HepG2 (cell line): ENCODE measurements at regions of chrX and their contacts with region 1.

Region 1: DNA sequence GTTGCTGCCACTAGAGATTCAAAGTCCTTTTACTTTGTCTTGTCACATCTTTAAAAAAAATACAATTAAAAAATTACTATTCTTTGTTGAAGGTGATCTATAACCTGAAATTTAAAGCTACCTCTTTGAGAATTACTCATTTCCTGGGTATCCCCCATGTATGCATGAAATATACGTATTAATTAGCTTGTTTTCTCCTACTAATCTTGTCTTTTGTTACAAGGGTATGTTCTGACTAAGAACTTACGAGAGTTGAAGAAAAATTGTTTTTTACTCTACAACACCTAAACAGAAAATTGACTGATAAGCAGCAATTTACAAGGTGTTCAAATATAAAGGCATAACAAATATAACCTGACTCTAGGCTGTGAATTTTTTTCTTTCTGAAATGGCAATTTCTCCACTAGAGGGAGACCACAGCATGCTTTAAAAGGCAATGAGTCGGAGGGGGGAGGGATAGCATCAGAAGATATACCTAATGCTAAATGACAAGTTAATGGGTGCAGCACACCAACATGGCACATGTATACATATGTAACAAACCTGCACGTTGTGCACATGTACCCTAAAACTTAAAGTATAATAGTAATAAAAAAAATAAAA is 249.6 kb downstream of the OPHN1 start:
- DNase-seq: peak; percentile 27
- ATAC-seq: peak; percentile 56; the same call in 1 of the 3 replicates
- H3K4me3 ChIP-seq: no peak overlapping the region
- H3K27ac ChIP-seq: no peak overlapping the region
- H3K4me1 ChIP-seq: no peaks in the 10 kb centered on the region
- H3K27me3 ChIP-seq: no peaks in the 10 kb centered on the region
- CTCF ChIP-seq: peak; percentile 52
- EP300 ChIP-seq: no peak
- POLR2A ChIP-seq: no peak
- RAD21 ChIP-seq: no peak

Region 2: DNA sequence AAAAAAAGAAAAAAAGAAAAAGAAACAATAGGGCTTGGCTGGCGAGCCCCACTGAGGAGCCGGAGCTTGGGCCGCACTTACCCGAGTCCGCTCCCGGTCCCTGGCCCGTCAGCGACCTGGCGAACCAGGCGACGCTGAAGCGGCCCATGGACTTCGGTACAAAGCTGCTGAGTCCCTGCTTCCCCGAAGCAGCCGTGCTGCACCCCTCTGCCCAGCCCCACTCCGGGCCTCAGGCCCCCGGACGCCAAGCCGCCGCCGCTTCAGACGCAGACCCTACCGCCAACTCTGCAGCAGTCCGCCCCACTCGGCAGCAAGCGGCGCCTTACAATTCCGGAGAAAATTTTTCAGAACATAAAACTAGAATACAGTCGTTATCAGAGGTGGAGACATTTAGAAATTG is 51.0 kb before region 1 on chrX:
- CTCF ChIA-PET with region 1: no interaction called
- POLR2A ChIA-PET with region 1: no interaction called
- in situ Hi-C with region 1: no loop called
- intact Hi-C with region 1: no loop called
- DNase-seq: no peak
- ATAC-seq: no peak
- H3K4me3 ChIP-seq: no peak overlapping the region
- H3K27ac ChIP-seq: no peak overlapping the region
- H3K4me1 ChIP-seq: no peaks in the 10 kb centered on the region
- H3K27me3 ChIP-seq: no peaks in the 10 kb centered on the region
- CTCF ChIP-seq: no peak
- EP300 ChIP-seq: no peak
- POLR2A ChIP-seq: no peak
- RAD21 ChIP-seq: no peak

Region 3: GRCh38 chrX:68273887-68274286 is 90.2 kb after region 1 on chrX:
- CTCF ChIA-PET with region 1: no interaction called
- POLR2A ChIA-PET with region 1: no interaction called
- in situ Hi-C with region 1: no loop called
- intact Hi-C with region 1: no loop called
- DNase-seq: no peak
- ATAC-seq: no peak
- H3K4me3 ChIP-seq: no peak overlapping the region
- H3K27ac ChIP-seq: no peak overlapping the region
- H3K4me1 ChIP-seq: no peaks in the 10 kb centered on the region
- H3K27me3 ChIP-seq: no peaks in the 10 kb centered on the region
- CTCF ChIP-seq: no peak
- EP300 ChIP-seq: no peak
- POLR2A ChIP-seq: no peak
- RAD21 ChIP-seq: no peak

Region 4: GRCh38 chrX:68710870-68711576 is 527.3 kb after region 1 on chrX:
- CTCF ChIA-PET with region 1: interaction called, 4 read pairs
- POLR2A ChIA-PET with region 1: no interaction called
- in situ Hi-C with region 1: no loop called
- intact Hi-C with region 1: loop called (anchors 5 kb)
- DNase-seq: peak; percentile 40
- ATAC-seq: peak; percentile 97
- H3K4me3 ChIP-seq: no peak overlapping the region
- H3K27ac ChIP-seq: no peak overlapping the region
- H3K4me1 ChIP-seq: no peaks in the 10 kb centered on the region
- H3K27me3 ChIP-seq: no peaks in the 10 kb centered on the region
- CTCF ChIP-seq: peak; percentile 84
- EP300 ChIP-seq: no peak
- POLR2A ChIP-seq: no peak
- RAD21 ChIP-seq: peak; percentile 75

Region 5: GRCh38 chrX:68807818-68808217 is 624.1 kb after region 1 on chrX:
- CTCF ChIA-PET with region 1: no interaction called
- POLR2A ChIA-PET with region 1: no interaction called
- in situ Hi-C with region 1: no loop called
- intact Hi-C with region 1: loop called (anchors 10 kb)
- DNase-seq: no peak
- ATAC-seq: peak; percentile 66
- H3K4me3 ChIP-seq: no peak overlapping the region
- H3K27ac ChIP-seq: no peak overlapping the region
- H3K4me1 ChIP-seq: no peaks in the 10 kb centered on the region
- H3K27me3 ChIP-seq: no peaks in the 10 kb centered on the region
- CTCF ChIP-seq: peak; percentile 60
- EP300 ChIP-seq: no peak
- POLR2A ChIP-seq: no peak
- RAD21 ChIP-seq: no peak